Activated T-helper 1 cell treated with anti-CD3 and anti-CD28 coated beads, Interleukin-12 subunit alpha, Interleukin-12 subunit beta, Interleukin-2, Interleukin-4 antibody, amounts not matched to agents 30 ng/mL and 10 ng/mL and 1 ng/mL, durations not matched to agents 14 hours and 24 hours and 36 hours (primary cell): ENCODE measurements at regions of chr1 and their contacts with region 1.

Region 1: GRCh38 chr1:12161662-12162458 is 4.9 kb upstream of the TNFRSF1B start:
- DNase-seq: peak; percentile 79
- H3K4me3 Mint-ChIP-seq: peak overlapping the region; percentile 69
- H3K27ac Mint-ChIP-seq: peak overlapping the region; percentile 95
- H3K4me1 Mint-ChIP-seq: peaks cover 82% of the 10 kb centered on the region
- H3K27me3 Mint-ChIP-seq: no peaks in the 10 kb centered on the region

Region 2: DNA sequence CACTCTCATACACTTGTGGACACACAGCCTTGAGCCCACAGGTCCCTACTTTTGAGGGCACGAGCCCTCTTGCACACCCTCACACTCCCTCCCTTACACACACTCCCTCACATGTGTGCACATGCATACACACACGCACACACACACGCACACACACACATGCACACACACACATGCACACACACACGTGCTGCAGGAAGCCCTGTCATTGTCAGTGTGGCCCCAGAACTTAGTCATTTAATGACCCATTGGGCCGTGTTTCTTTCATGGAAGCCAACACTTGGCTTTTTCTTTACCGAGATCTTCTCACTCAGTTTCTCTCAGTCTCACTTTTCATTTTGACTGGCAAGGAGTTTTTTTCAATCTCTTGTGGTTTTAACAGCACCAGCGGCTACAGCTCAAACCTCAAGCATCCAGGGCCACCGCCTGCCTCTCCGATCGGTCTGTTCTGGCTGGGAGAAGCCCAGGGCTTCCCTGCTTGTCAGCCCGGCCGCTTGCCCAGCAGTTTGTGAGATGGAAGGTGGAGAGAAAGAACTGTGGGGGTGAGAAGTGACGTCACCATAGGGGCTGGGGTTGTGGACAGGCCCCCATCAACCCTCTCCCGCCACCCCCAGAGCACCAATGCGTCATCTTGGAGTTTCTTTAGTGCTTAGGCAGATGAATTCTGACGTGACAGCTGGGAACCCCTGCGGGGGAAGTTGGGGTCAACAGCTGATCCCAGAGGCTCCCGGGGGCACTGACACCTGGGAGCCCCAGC is 114.6 kb before region 1 on chr1:
- intact Hi-C with region 1: loop called (anchors 5 kb)
- DNase-seq: peak; percentile 71
- H3K4me3 Mint-ChIP-seq: no peak overlapping the region
- H3K27ac Mint-ChIP-seq: no peak overlapping the region
- H3K4me1 Mint-ChIP-seq: peaks cover 18% of the 10 kb centered on the region
- H3K27me3 Mint-ChIP-seq: no peaks in the 10 kb centered on the region

Region 3: DNA sequence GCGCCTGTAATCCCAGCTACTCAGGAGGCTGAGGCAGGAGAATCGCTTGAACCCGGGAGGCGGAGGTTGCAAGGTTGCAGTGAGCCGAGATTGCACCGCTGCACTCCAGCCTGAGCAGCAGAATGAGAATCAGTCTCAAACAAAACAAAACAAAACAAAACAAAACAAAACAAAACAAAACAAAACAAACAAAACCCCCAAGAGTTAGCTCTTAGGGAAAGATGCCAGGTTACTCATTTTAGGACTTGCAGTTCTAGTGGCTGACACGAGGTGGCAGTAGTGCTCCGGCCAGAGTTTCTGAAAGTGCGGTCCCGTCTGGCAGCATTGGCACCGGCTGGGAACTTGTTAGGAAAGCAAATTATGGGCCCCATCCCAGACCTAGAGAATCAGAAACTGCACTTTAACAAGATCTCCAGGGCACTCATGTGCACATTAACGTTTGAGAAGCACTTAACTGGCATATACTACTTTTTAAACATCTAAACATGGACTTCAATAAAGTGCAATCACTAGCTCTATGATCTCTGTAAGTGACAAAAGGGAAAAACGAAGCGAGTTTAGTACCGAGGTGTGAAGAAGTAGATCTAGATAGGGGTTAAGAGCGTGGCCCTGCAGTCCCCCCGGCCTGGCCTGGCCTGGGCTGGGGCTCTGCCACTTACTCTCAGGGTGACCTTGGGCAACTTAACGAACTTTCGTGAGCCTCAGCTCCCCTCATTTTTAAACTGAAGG is 37.0 kb before region 1 on chr1:
- intact Hi-C with region 1: loop called (anchors 1 kb)
- DNase-seq: peak; percentile 71
- H3K4me3 Mint-ChIP-seq: peak overlapping the region; percentile 20
- H3K27ac Mint-ChIP-seq: peak overlapping the region; percentile 80
- H3K4me1 Mint-ChIP-seq: peaks cover 49% of the 10 kb centered on the region
- H3K27me3 Mint-ChIP-seq: no peaks in the 10 kb centered on the region

Region 4: DNA sequence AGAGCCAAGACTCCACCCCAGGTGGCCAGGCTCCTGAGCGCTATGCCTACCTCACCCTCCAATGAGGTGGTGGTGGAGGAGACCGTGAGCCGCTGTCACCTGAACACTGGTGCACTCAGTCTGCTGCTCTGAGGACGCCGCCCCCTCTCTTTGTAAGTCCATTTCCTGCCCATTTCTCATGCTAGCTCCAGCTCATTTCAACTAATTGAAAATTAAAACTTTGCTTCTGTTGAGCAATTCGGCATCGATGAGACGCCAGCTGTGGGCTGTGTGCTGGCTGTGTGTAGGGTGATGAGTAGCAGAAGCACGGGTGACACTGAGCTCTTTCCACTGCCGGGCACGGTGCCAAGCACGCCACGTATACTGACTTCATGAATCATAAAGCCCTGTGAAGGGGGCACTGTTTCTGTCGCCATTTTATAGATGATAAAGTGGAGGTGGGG is 16.2 kb after region 1 on chr1:
- intact Hi-C with region 1: loop called (anchors 1 kb)
- DNase-seq: peak; percentile 62
- H3K4me3 Mint-ChIP-seq: peak overlapping the region; percentile 79
- H3K27ac Mint-ChIP-seq: peak overlapping the region; percentile 96
- H3K4me1 Mint-ChIP-seq: peaks cover 84% of the 10 kb centered on the region
- H3K27me3 Mint-ChIP-seq: no peaks in the 10 kb centered on the region

Region 5: DNA sequence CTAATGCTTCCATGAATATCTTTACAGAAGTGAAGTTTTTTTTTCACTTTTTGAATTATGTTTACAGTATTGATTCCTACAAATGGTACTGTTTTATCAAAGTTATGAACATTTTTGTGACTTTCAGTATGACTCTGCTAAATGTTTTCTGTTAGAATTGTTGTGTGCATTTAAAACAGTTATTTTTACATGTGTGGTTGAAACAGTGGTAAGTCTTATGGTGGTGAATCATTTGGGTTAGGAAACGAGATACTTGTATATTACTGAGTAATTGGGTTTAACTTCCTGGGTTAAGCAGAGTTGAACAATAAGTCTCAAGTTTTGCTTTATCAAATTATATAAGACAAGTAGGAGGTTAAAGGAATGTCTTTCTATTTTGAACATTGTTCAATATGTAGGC is 134.8 kb after region 1 on chr1:
- intact Hi-C with region 1: loop called (anchors 5 kb)
- DNase-seq: no peak
- H3K4me3 Mint-ChIP-seq: peak overlapping the region; percentile 50
- H3K27ac Mint-ChIP-seq: peak overlapping the region; percentile 72
- H3K4me1 Mint-ChIP-seq: peaks cover 46% of the 10 kb centered on the region
- H3K27me3 Mint-ChIP-seq: no peaks in the 10 kb centered on the region